ENCODE measurements at regions of chr20 and their contacts with region 1.

Region 1: GRCh38 chr20:59222253-59223181 is 58.9 kb downstream of the ZNF831 start:
- DNase-seq: peak; percentile 64 to 89 (median 82)
- ATAC-seq: peak; percentile 94
- H3K4me3 ChIP-seq: peak overlapping the region; percentile 39 to 50
- H3K4me3 Mint-ChIP-seq: peak overlapping the region; percentile 78
- H3K27ac ChIP-seq: peak overlapping the region in 1 of 2 experiments; percentile 31
- H3K27ac Mint-ChIP-seq: peak overlapping the region; percentile 88
- H3K4me1 ChIP-seq: peaks cover 18% of the 10 kb centered on the region
- H3K4me1 Mint-ChIP-seq: peaks cover 34% of the 10 kb centered on the region
- H3K27me3 ChIP-seq: no peaks in the 10 kb centered on the region
- H3K27me3 Mint-ChIP-seq: no peaks in the 10 kb centered on the region
- CTCF ChIP-seq: peak; percentile 96

Region 2: GRCh38 chr20:58236612-58237330 is 985.7 kb before region 1 on chr20:
- CTCF ChIA-PET with region 1: no interaction called
- POLR2A ChIA-PET with region 1: no interaction called
- intact Hi-C with region 1: loop called in 1 of 2 experiments (anchors 10 kb)
- DNase-seq: peak; percentile 70 to 91 (median 82)
- ATAC-seq: peak; percentile 87
- H3K4me3 ChIP-seq: peak overlapping the region; percentile 53 to 85
- H3K4me3 Mint-ChIP-seq: peak overlapping the region; percentile 86
- H3K27ac ChIP-seq: peak overlapping the region; percentile 56 to 73
- H3K27ac Mint-ChIP-seq: peak overlapping the region; percentile 89
- H3K4me1 ChIP-seq: peaks cover 7% of the 10 kb centered on the region
- H3K4me1 Mint-ChIP-seq: peaks cover 19% of the 10 kb centered on the region
- H3K27me3 ChIP-seq: no peaks in the 10 kb centered on the region
- H3K27me3 Mint-ChIP-seq: no peaks in the 10 kb centered on the region
- CTCF ChIP-seq: peak; percentile 96

Region 3: GRCh38 chr20:58980700-58981627 is 241.6 kb before region 1 on chr20 and contains the start of gene NELFCD:
- CTCF ChIA-PET with region 1: no interaction called
- POLR2A ChIA-PET with region 1: interaction called, 4 read pairs
- intact Hi-C with region 1: loop called in 1 of 2 experiments (anchors 1 kb)
- DNase-seq: peak; percentile 81 to 94 (median 89)
- ATAC-seq: peak; percentile 87
- H3K4me3 ChIP-seq: peak within 1 kb of the TSS; percentile 77 to 93
- H3K4me3 Mint-ChIP-seq: peak within 1 kb of the TSS; percentile 93
- H3K27ac ChIP-seq: peak within 1 kb of the TSS; percentile 62 to 66
- H3K27ac Mint-ChIP-seq: peak within 1 kb of the TSS; percentile 94
- H3K4me1 ChIP-seq: peaks cover 29% of the 10 kb centered on the region
- H3K4me1 Mint-ChIP-seq: peaks cover 39% of the 10 kb centered on the region
- H3K27me3 ChIP-seq: no peaks in the 10 kb centered on the region
- H3K27me3 Mint-ChIP-seq: no peaks in the 10 kb centered on the region
- CTCF ChIP-seq: no peak
- total RNA-seq, gene NELFCD: 101 to 113 TPM

Region 4: DNA sequence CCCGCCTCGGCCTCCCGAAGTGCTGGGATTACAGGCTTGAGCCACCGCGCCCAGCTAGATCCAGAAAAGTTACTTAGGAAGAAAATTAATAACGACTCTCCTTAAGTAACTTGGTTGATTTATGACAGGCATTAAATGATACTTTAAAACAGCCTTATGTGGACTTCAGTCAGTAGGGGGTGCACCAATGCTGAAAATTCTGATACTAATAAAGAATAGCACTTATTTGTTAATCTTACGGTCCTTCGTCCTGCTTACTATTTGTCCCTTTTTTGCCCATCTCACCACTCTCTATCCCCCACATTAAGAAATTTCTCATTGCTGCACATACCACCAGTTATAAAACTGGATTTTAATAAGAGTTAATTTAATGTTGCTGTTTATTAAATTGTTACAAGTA is 167.2 kb before region 1 on chr20:
- CTCF ChIA-PET with region 1: interaction called, 4 read pairs
- POLR2A ChIA-PET with region 1: no interaction called
- intact Hi-C with region 1: loop called in 1 of 2 experiments (anchors 1 kb)
- DNase-seq: peak in 3 of 9 experiments; percentile 16 to 60 (median 49)
- ATAC-seq: no peak
- H3K4me3 ChIP-seq: no peak overlapping the region
- H3K4me3 Mint-ChIP-seq: no peak overlapping the region
- H3K27ac ChIP-seq: no peak overlapping the region
- H3K27ac Mint-ChIP-seq: no peak overlapping the region
- H3K4me1 ChIP-seq: no peaks in the 10 kb centered on the region
- H3K4me1 Mint-ChIP-seq: no peaks in the 10 kb centered on the region
- H3K27me3 ChIP-seq: peaks cover 0 to 4% of the 10 kb centered on the region in 2 experiments
- H3K27me3 Mint-ChIP-seq: peaks cover 33% of the 10 kb centered on the region
- CTCF ChIP-seq: peak; percentile 24

Region 5: GRCh38 chr20:59159493-59160376 is 62.8 kb before region 1 on chr20:
- CTCF ChIA-PET with region 1: interaction called, 9 read pairs
- POLR2A ChIA-PET with region 1: no interaction called
- intact Hi-C with region 1: loop called in 1 of 2 experiments (anchors 2 kb)
- DNase-seq: peak; percentile 56 to 97 (median 79)
- ATAC-seq: peak; percentile 86
- H3K4me3 ChIP-seq: peak overlapping the region; percentile 47 to 67
- H3K4me3 Mint-ChIP-seq: peak overlapping the region; percentile 83
- H3K27ac ChIP-seq: peak overlapping the region; percentile 79 to 93
- H3K27ac Mint-ChIP-seq: peak overlapping the region; percentile 98
- H3K4me1 ChIP-seq: peaks cover 69% of the 10 kb centered on the region
- H3K4me1 Mint-ChIP-seq: peaks cover 91% of the 10 kb centered on the region
- H3K27me3 ChIP-seq: no peaks in the 10 kb centered on the region
- H3K27me3 Mint-ChIP-seq: no peaks in the 10 kb centered on the region
- CTCF ChIP-seq: peak; percentile 23

Region 6: DNA sequence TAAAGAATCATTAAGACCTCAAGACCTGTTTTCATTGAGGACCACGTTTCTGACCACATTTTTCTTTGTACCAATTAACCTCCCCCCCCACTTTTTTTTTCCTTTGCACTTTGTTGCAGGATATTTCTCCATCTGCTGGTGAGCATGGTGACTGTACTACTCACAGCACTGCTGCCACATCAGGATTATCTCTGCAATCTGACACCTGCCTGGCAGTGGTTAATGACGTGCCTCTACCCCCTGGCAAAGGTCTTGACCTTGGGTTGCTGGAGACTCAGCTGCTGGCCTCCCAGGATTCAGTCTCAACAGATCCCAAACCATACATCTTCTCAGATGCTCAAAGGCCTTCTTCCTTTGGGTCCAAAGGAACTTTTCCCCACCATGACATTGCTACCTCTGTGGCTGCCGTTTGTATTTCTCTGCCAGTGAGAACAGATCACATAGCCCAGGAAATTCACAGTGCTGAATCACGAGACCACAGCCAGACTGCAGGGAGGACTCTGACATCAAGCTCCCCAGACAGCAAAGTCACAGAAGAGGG is 31.3 kb after region 1 on chr20:
- CTCF ChIA-PET with region 1: interaction called, 4 read pairs
- POLR2A ChIA-PET with region 1: interaction called, 9 read pairs
- intact Hi-C with region 1: loop called in 1 of 2 experiments (anchors 1 kb)
- DNase-seq: peak in 7 of 9 experiments; percentile 26 to 70 (median 40)
- ATAC-seq: peak; percentile 61
- H3K4me3 ChIP-seq: peak overlapping the region in 1 of 2 experiments; percentile 18
- H3K4me3 Mint-ChIP-seq: peak overlapping the region; percentile 75
- H3K27ac ChIP-seq: peak overlapping the region; percentile 57 to 59
- H3K27ac Mint-ChIP-seq: peak overlapping the region; percentile 98
- H3K4me1 ChIP-seq: peaks cover 53% of the 10 kb centered on the region
- H3K4me1 Mint-ChIP-seq: peaks cover 74% of the 10 kb centered on the region
- H3K27me3 ChIP-seq: no peaks in the 10 kb centered on the region
- H3K27me3 Mint-ChIP-seq: no peaks in the 10 kb centered on the region
- CTCF ChIP-seq: no peak